Activated CD4-positive, alpha-beta memory T cell treated with anti-CD3 and anti-CD28 coated beads for 36 hours (primary cell): ENCODE measurements at regions of chr12 and their contacts with region 1.

Region 1: GRCh38 chr12:12171991-12172521 is 94.8 kb downstream of the LRP6 start:
- DNase-seq: peak; percentile 49
- H3K4me3 Mint-ChIP-seq: no peak overlapping the region
- H3K27ac Mint-ChIP-seq: no peak overlapping the region
- H3K4me1 Mint-ChIP-seq: peaks cover 12% of the 10 kb centered on the region
- H3K27me3 Mint-ChIP-seq: peaks cover 11% of the 10 kb centered on the region

Region 2: DNA sequence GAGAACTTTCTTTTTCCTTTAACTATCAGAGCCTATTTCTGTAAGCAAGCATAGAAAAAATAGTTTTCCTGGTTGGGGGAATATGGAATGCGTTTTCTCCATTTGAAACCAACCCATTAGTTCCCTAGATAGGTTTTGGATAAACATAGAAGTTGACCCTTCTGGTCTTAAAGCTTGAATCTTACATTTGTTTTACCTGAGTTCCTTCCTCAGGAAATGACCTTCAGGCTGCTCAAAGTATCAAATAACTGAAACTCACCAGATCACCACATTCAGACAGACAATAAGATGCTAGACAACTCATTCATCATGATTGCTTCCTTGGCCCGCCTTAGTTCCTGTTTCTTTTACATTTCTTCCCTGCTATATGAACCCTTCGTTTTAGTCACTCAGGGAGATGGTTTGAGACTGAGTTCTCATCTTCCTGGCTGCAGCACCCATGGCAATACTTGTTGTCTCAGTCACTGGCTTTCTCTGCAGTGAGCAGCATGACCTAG is 42.6 kb after region 1 on chr12:
- CTCF ChIA-PET with region 1: no interaction called
- POLR2A ChIA-PET with region 1: no interaction called
- intact Hi-C with region 1: loop called (anchors 5 kb)
- DNase-seq: no peak
- H3K4me3 Mint-ChIP-seq: no peak overlapping the region
- H3K27ac Mint-ChIP-seq: no peak overlapping the region
- H3K4me1 Mint-ChIP-seq: peaks cover 13% of the 10 kb centered on the region
- H3K27me3 Mint-ChIP-seq: peaks cover 5% of the 10 kb centered on the region

Region 3: GRCh38 chr12:12240662-12241340 is 68.7 kb after region 1 on chr12:
- CTCF ChIA-PET with region 1: no interaction called
- POLR2A ChIA-PET with region 1: no interaction called
- intact Hi-C with region 1: no loop called
- DNase-seq: no peak
- H3K4me3 Mint-ChIP-seq: no peak overlapping the region
- H3K27ac Mint-ChIP-seq: no peak overlapping the region
- H3K4me1 Mint-ChIP-seq: no peaks in the 10 kb centered on the region
- H3K27me3 Mint-ChIP-seq: peaks cover 2% of the 10 kb centered on the region